ENCODE measurements at regions of chr20 and their contacts with region 1.

Region 1: DNA sequence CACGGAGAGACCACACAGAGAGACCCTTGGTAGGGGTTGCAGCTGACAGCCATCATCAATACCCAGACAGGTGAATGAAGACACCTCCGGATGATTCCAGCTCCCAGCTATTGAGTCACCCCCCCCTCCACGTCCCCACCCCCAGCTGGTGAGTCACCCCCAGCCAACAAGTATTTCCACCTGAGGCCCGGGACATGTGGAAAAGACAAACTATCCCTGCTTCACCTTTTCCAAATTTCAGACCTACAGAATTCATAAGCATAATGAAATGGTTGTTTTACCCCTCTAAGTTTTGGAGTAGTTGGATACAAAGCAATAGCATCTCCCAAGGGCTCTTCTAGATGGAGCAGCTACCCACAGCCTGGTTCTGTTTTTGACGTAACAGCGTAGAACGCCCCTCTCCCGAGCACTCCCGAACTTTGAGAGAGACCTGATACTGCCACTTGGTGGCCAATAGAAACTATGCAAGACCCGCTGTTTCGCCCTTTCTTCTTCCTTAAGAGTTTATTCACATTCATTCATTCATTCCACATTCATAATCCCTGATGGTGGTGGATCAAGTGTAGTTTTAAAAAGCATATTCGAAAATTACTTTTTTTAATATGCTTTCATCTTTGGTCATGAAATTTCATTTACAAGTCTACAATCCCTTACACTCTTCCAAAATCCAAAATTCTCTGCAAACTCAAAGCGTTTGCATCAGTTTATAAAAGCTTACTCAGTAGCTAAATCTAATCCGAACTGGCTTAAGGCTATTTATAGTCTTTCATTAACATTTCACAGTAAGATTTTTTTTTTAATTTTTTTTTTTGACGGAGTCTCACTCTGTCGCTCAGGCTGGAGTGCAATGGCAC is 15.1 kb upstream of the PPP1R16B start:
- DNase-seq: peak; percentile 63
- ATAC-seq: peak; percentile 51
- H3K4me3 Mint-ChIP-seq: no peak overlapping the region
- H3K27ac Mint-ChIP-seq: no peak overlapping the region
- H3K4me1 Mint-ChIP-seq: peaks cover 21% of the 10 kb centered on the region
- H3K27me3 Mint-ChIP-seq: peaks cover 4% of the 10 kb centered on the region

Region 2: DNA sequence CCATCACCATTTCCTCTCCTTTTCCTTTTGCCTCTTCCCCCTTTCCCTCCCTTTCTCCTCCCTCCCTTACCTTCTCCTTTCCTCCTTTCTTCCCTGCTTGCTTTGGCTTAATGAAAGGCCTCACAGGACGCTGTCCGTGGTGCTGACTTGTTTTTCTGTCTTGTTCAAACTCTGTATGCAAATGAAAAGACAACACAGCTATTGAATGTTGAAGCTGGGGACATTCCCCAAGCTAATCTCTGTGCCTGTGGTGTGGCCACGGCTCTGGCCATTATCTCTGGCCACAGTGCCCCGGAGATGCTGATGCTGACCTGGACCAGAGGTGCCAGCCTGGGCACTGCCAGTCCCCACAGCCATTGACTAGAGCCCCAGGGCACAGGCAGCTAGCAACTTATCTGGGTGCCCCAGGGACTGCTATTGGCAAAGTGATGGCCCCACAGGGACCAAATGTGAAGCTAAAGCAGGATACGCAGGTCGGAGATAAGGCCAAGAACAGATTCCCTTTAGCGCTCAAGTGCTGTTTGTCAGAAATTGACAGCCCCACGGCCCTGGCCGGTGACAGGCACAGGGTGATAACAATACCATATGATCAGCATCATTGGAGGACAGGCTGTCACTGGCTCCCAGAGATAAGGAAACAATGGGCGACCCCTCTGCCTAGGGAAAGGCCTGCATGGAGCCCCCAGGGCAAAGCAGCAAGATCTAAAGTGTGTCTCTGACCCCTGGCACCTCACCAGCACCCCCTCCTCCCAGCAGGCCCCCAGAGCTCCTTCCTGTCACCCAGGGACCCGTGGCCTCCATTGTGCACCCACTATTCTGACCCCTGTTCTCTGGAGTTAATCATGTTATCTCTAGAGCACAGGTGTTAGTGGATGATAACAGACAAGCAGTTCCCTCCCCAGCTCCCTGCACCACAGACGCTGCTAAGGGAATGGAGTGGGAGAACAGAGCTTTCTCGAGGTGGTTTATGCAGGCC is 97.7 kb before region 1 on chr20:
- CTCF ChIA-PET with region 1: no interaction called
- POLR2A ChIA-PET with region 1: no interaction called
- DNase-seq: peak; percentile 77
- ATAC-seq: no peak
- H3K4me3 Mint-ChIP-seq: no peak overlapping the region
- H3K27ac Mint-ChIP-seq: no peak overlapping the region
- H3K4me1 Mint-ChIP-seq: no peaks in the 10 kb centered on the region
- H3K27me3 Mint-ChIP-seq: peaks cover 6% of the 10 kb centered on the region

Region 3: DNA sequence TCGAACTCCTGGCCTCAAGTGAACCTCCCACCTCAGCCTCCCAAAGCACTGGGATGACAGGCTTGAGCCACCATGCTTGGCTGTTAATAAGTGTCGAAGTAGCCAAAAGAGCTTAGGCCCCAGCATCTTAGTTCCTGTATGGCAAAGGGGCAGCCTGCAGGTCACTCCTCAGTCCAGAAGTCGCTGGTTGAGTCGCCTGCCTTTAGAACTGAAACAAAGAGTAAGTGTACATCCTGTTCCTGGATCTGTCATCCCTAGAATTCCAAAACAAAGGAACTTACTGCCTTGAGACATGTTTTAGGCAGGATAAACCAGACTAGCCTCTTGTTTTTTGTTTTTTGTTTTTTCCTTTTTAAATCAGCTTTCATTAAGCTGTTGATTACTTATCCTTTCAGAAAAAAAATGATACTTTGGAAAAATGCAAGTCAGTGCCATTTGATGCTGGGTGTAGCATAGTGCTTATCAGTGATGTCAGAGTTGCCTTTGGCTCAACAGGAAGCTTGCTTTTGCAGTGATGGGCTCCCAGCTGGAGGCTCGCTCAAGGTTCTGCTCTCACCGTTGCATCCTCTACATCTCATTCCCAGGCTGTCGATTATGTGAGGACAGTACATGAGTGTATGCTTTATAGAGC is 33.2 kb before region 1 on chr20:
- CTCF ChIA-PET with region 1: interaction called, 35 read pairs
- POLR2A ChIA-PET with region 1: no interaction called
- DNase-seq: no peak
- ATAC-seq: no peak
- H3K4me3 Mint-ChIP-seq: no peak overlapping the region
- H3K27ac Mint-ChIP-seq: no peak overlapping the region
- H3K4me1 Mint-ChIP-seq: peaks cover 3% of the 10 kb centered on the region
- H3K27me3 Mint-ChIP-seq: no peaks in the 10 kb centered on the region

Measured in activated CD8-positive, alpha-beta T cell treated with anti-CD3 and anti-CD28 coated beads, Interleukin-2, amount 10 ng/mL, durations not matched to agents 7 days and 5 days (primary cell).